IMR-90 (cell line): ENCODE measurements at regions of chr6 and their contacts with region 1.

Region 1: GRCh38 chr6:6724539-6725467 is 136.3 kb downstream of the LY86 start:
- DNase-seq: peak; percentile 76
- ATAC-seq: peak; percentile 96
- H3K4me3 ChIP-seq: peak overlapping the region; percentile 39
- H3K27ac ChIP-seq: peak overlapping the region; percentile 8
- H3K4me1 ChIP-seq: peaks cover 5% of the 10 kb centered on the region
- H3K27me3 ChIP-seq: no peaks in the 10 kb centered on the region
- CTCF ChIP-seq: peak; percentile 80
- POLR2A ChIP-seq: no peak
- RAD21 ChIP-seq: peak; percentile 84

Region 2: DNA sequence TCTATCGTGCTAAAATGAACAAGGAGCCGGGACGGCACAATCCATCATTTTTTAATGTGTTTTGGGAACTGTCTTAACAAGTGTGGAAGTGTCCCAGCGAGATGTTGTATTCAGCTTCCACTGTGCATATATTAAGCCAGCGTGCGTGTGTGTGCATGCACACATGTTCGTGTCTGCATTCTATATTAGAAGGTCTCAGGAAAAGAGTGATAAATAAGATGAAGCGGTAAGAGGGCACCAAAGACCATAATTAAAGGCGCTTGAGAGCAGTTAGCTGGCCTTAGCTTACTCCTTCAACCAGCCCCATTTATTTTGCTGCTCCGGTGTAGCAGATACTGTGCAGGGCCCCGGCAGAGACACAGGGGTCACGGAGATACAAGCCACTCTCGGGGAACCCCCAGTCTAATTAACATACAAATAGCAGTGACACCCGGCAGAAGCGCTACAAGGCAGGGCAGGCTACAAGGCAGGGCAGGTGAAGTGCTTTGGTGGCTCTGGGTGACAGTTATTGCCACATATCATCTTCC is 176.5 kb after region 1 on chr6:
- CTCF ChIA-PET with region 1: no interaction called
- POLR2A ChIA-PET with region 1: no interaction called
- dilution Hi-C with region 1: no loop called
- in situ Hi-C with region 1: no loop called
- intact Hi-C with region 1: no loop called
- DNase-seq: no peak
- ATAC-seq: no peak
- H3K4me3 ChIP-seq: no peak overlapping the region
- H3K27ac ChIP-seq: no peak overlapping the region
- H3K4me1 ChIP-seq: no peaks in the 10 kb centered on the region
- H3K27me3 ChIP-seq: peaks cover 20% of the 10 kb centered on the region
- CTCF ChIP-seq: no peak
- POLR2A ChIP-seq: no peak
- RAD21 ChIP-seq: no peak

Region 3: GRCh38 chr6:7140631-7141378 is 416.0 kb after region 1 on chr6:
- CTCF ChIA-PET with region 1: no interaction called
- POLR2A ChIA-PET with region 1: interaction called, 3 read pairs
- dilution Hi-C with region 1: no loop called
- in situ Hi-C with region 1: no loop called
- intact Hi-C with region 1: loop called (anchors 10 kb)
- DNase-seq: peak; percentile 66
- ATAC-seq: peak; percentile 90
- H3K4me3 ChIP-seq: peak overlapping the region; percentile 69
- H3K27ac ChIP-seq: peak overlapping the region; percentile 97
- H3K4me1 ChIP-seq: peaks cover 24% of the 10 kb centered on the region
- H3K27me3 ChIP-seq: no peaks in the 10 kb centered on the region
- CTCF ChIP-seq: 0 out of 2 replicates have a peak, but pooled peaks have one; percentile 5
- POLR2A ChIP-seq: peak; percentile 80
- RAD21 ChIP-seq: no peak

Region 4: GRCh38 chr6:7235712-7236311 is 511.0 kb after region 1 on chr6:
- CTCF ChIA-PET with region 1: interaction called, 5 read pairs
- POLR2A ChIA-PET with region 1: no interaction called
- dilution Hi-C with region 1: no loop called
- in situ Hi-C with region 1: no loop called
- intact Hi-C with region 1: loop called (anchors 2 kb)
- DNase-seq: no peak
- ATAC-seq: no peak
- H3K4me3 ChIP-seq: no peak overlapping the region
- H3K27ac ChIP-seq: no peak overlapping the region
- H3K4me1 ChIP-seq: peaks cover 5% of the 10 kb centered on the region
- H3K27me3 ChIP-seq: no peaks in the 10 kb centered on the region
- CTCF ChIP-seq: no peak
- POLR2A ChIP-seq: no peak
- RAD21 ChIP-seq: no peak

Region 5: DNA sequence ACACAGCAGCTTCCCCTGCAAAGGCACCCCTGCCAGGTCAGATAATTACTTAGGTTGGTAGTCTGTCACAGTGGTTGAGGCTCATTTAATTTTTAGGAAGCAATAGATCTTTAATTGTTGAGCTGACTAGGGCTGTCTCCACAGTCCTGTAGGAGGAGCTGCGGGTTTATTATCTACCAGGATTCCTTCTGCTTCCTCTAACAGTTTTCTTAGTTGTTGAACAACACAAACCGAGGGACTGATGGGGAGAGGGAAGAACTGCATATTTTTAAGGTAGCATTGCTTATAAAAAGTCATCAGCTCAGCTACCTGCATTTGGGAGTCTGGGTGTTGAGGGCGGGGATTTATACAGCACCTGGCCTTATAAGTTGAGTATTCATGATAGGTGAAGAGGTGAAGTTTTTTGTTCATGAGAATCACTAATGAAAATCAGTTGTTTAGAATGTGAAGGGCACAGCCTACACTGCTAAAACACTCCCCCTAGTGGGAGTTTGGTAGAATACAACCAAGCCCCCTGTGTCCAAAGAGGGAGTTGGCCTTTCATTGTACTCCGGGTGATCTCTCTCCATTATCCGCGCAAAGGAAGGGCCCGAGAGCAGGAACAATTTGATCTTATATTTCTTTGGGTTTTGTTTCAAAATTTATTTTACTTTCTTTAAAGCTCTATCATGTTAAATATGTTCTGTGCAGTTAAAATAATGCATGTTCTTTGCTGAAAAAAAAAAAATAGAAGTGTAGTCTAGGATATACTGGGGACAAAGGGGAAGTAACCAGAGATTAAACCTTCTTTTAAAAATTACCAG is 518.6 kb after region 1 on chr6:
- CTCF ChIA-PET with region 1: interaction called, 11 read pairs
- POLR2A ChIA-PET with region 1: no interaction called
- dilution Hi-C with region 1: no loop called
- in situ Hi-C with region 1: loop called (anchors 5 kb)
- intact Hi-C with region 1: loop called (anchors 1 kb)
- DNase-seq: peak; percentile 64
- ATAC-seq: peak; percentile 82
- H3K4me3 ChIP-seq: no peak overlapping the region
- H3K27ac ChIP-seq: peak overlapping the region; percentile 49; the same call in 1 of the 2 replicates
- H3K4me1 ChIP-seq: peaks cover 11% of the 10 kb centered on the region
- H3K27me3 ChIP-seq: no peaks in the 10 kb centered on the region
- CTCF ChIP-seq: peak; percentile 90
- POLR2A ChIP-seq: no peak
- RAD21 ChIP-seq: peak; percentile 86

Region 6: DNA sequence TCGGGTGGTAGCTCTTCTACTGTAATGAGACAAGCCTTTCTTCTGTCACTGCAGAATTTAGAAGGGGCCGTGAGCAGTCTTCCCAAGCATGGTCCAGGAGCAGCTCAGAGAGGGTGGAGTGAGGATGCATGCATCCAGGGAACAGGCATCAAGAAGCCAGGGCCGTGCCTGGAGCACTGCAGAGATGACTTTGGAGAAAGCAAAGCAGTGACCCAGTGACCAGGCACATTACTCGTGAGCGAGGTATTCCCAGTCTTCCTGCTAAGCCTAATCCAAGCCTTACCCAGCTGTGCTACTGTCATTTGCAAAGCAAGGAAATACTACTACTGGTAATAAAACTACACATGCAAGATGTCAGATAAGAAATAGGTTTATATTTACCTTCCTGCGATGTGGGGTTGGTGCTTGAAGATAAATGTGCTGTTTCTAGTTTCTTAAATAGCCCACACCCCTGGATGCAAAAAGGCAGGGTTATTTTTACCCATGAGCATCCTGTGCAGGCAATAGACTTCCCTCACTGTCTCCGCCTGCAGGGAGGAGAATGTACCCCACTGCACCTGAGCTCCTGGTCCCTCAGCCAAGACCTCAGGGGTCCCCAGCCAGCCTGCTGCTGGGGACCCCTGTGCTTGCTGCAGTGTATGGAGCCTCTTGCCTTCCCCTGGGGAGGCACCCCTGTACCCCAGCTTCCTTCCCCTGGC is 525.3 kb after region 1 on chr6:
- CTCF ChIA-PET with region 1: no interaction called
- POLR2A ChIA-PET with region 1: no interaction called
- dilution Hi-C with region 1: no loop called
- in situ Hi-C with region 1: loop called (anchors 5 kb)
- intact Hi-C with region 1: no loop called
- DNase-seq: peak; percentile 59
- ATAC-seq: peak; percentile 72
- H3K4me3 ChIP-seq: no peak overlapping the region
- H3K27ac ChIP-seq: no peak overlapping the region
- H3K4me1 ChIP-seq: no peaks in the 10 kb centered on the region
- H3K27me3 ChIP-seq: no peaks in the 10 kb centered on the region
- CTCF ChIP-seq: no peak
- POLR2A ChIP-seq: no peak
- RAD21 ChIP-seq: no peak

Region 7: DNA sequence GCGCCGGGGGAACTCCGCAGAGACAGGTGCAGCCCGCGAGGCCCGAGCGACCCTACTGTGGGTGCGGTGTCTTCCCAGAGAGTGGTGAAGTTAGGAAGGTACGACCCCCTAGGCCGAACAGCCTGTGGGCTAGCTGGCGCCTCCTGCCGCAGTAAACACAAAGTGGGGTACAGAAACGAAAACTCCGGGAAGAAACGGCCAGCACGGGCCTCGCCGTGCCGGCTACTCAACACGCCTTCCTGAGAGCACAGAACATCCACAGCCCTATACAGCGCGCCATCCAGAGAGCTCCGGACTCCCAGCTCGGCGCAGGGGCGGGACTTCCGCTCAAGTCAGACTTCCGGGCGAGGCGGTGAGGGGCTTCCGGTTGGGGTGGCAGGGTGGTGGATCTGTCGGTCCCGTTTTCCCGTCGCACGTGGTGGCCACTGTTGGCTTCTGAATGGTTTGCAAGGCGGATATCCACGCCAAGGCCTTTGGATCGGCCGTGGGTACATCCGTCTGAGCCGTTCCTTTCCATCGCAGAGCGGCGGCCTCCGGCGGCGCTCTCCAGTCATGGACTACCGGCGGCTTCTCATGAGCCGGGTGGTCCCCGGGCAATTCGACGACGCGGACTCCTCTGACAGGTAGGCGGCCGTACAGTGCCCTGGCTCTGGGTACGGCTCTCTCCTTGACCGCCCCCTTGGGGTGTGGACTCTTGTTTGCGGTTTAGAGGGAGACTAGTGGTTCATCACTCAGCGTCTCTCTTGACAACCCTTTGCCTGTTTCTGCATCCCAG is 664.8 kb after region 1 on chr6 and contains the starts of genes CAGE1 and RIOK1:
- CTCF ChIA-PET with region 1: no interaction called
- POLR2A ChIA-PET with region 1: no interaction called
- dilution Hi-C with region 1: no loop called
- in situ Hi-C with region 1: no loop called
- intact Hi-C with region 1: loop called (anchors 5 kb)
- DNase-seq: peak; percentile 93
- ATAC-seq: peak; percentile 96
- H3K4me3 ChIP-seq: peak within 1 kb of the TSS; percentile 67
- H3K27ac ChIP-seq: peak within 1 kb of the TSS; percentile 82
- H3K4me1 ChIP-seq: no peaks in the 10 kb centered on the region
- H3K27me3 ChIP-seq: no peaks in the 10 kb centered on the region
- CTCF ChIP-seq: 0 out of 2 replicates have a peak, but pooled peaks have one; percentile 1
- POLR2A ChIP-seq: peak; percentile 78
- RAD21 ChIP-seq: no peak
- total RNA-seq, gene CAGE1: under 0.01 TPM in 1 of 2 replicates, not detected in the other
- total RNA-seq, gene RIOK1: 17.0 and 27.2 TPM in 2 replicates

Region 8: DNA sequence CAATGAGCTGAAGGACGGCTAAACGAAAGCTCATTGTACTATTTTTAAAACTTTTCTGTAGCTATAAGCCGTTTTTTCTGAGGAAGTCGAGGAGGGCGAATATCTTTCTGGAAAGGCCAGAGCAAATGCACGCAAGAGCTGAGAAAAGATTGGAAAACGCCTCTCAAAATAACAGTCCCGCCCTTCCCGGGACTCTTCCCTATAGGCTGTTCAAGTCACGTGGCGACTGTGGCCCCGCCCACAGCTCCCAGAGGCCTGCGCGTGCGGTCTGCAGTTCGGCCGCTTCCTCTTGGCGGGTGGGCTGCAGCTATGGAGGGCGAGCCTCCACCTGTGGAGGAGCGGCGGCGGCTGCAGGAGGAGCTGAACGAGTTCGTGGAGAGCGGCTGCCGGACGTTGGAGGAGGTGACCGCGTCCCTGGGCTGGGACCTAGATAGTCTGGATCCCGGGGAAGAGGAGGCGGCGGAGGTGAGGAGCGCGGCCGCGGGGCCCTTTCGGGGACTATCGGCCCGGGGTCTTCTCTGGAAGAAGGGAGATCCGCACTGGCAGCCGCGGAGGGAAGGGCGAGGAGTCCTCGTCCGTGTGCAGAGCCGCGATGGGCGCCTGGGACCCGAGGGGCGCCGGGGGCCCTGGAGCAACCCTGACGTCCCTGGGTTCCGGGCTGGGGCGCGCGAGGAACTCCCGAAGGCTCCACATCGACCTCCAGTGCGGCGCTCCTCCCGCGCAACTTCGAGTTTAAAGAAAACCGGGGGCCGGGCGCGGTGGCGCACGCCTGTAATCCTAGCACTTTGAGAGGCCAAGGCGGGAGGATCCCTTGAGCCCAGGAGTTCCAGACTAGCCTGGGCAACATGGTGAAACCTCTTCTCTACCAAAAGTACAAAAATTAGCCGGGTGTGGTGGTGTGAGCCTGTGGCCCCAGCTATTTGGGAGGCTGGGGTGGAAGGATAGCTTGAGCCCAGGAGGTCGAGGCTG is 865.4 kb after region 1 on chr6 and contains the start of gene SNRNP48:
- CTCF ChIA-PET with region 1: no interaction called
- POLR2A ChIA-PET with region 1: no interaction called
- dilution Hi-C with region 1: no loop called
- in situ Hi-C with region 1: no loop called
- intact Hi-C with region 1: loop called (anchors 2 kb)
- DNase-seq: peak; percentile 91
- ATAC-seq: peak; percentile 99
- H3K4me3 ChIP-seq: peak within 1 kb of the TSS; percentile 98
- H3K27ac ChIP-seq: peak within 1 kb of the TSS; percentile 94
- H3K4me1 ChIP-seq: peaks cover 8% of the 10 kb centered on the region
- H3K27me3 ChIP-seq: no peaks in the 10 kb centered on the region
- CTCF ChIP-seq: no peak
- POLR2A ChIP-seq: no peak
- RAD21 ChIP-seq: no peak
- total RNA-seq, gene SNRNP48: 5.2 and 9.4 TPM in 2 replicates